Left cardiac atrium (tissue), 4 donors: ENCODE measurements at regions of chr5 and their contacts with region 1.

Region 1: GRCh38 chr5:78320401-78320800 is 25.9 kb upstream of the AP3B1 start:
- DNase-seq: no peak
- ATAC-seq: no peak

Region 2: GRCh38 chr5:78648359-78649210 is 328.2 kb after region 1 on chr5 and contains the start of gene LHFPL2:
- intact Hi-C with region 1: loop called in 1 of 2 experiments (anchors 10 kb)
- DNase-seq: peak; percentile 87
- ATAC-seq: peak; percentile 89 to 91
- total RNA-seq, gene LHFPL2: 12.5 to 23.9 TPM